ENCODE measurements at regions of chr2 and their contacts with region 1.

Region 1: DNA sequence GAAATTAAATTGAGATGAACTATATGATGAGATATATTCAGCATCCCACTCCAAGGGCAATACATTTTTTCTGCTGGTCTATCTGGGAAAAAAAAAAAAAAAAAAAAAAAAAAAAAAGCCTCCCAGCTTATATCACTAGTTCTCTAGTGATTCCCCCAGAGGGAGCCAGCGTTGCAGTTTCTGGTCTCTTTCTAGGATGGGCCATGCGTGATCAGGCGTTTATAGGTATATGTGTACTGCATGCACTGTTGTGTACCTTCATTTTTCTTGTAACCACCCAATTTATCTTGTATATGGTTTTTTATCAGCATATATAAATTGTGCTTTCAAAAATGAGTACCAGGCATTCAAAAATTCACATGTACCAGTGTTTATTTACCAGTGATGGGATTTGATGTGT is 35.1 kb downstream of the DCDC2C start:
- DNase-seq: peak; percentile 46
- ATAC-seq: peak; percentile 53
- H3K4me3 Mint-ChIP-seq: no peak overlapping the region
- H3K27ac Mint-ChIP-seq: no peak overlapping the region
- H3K4me1 Mint-ChIP-seq: no peaks in the 10 kb centered on the region
- H3K27me3 Mint-ChIP-seq: peaks cover 7% of the 10 kb centered on the region
- CTCF ChIP-seq: peak; percentile 25

Region 2: DNA sequence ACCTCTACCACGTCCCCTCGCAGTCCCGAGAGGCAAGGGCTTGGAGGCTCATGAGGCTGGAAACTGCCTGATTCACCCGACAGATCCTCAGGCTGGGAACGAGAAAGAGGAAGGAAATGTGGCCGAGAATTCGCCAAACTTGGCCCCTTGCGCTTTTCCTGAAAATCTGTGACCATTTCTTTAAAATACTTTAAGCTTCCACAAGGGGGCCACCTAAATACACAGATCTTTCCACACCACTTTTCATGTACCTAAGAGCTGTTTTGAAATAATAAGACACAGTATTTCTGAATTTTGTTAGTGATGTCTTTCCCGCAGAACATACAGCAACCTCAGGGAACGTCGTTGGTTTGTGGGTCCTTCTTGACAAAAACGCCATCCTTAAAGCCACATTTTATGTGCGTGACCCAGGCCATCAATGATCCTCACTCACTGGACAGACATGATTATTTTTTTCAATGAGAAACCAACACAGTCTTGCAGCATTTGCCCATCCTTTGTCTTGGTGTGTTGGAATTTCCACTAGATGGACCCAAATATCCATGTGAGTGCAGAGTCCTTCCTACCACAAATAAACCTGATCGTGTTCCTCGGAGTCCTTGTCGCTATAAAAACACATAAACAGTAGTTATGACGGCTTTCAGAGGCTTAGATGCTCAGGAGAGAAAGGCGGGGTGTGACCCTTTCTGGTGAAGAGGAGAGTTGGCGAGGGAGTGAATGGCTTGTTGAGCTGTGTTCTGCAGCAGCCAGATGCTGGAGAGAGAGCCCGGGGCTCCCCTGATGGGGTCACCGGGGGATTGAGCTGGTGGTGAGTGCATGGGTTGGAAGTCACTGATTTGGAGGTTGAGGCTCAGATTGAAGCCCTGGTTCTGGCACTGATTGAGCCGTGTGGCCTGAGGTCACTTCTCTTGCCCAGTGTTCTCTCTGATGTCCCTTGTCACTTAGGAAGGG is 10.1 kb before region 1 on chr2:
- CTCF ChIA-PET with region 1: interaction called, 11 read pairs
- POLR2A ChIA-PET with region 1: interaction called, 3 read pairs
- intact Hi-C with region 1: no loop called
- DNase-seq: no peak
- ATAC-seq: no peak
- H3K4me3 Mint-ChIP-seq: no peak overlapping the region
- H3K27ac Mint-ChIP-seq: no peak overlapping the region
- H3K4me1 Mint-ChIP-seq: no peaks in the 10 kb centered on the region
- H3K27me3 Mint-ChIP-seq: peaks cover 1% of the 10 kb centered on the region
- CTCF ChIP-seq: peak; percentile 64

Region 3: DNA sequence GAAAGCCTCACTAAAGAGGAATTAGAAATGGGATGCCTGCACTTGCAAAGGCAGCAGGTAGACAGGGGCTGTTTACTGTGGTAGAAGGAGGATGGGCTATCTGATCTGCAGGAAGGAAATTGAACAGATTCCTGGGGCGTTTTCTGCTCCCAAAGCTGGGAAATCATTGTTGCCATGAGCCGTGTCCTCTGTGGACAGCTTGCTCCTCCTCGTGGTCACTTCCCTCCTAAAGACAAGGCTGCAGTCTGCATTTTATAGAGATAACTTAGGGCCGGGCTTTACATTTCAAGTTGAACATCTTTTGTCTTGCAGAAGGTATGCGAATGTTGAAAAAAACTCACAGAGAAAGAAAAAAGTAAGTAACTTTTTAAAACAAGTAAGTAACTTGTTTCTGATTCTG is 15.8 kb after region 1 on chr2:
- CTCF ChIA-PET with region 1: no interaction called
- POLR2A ChIA-PET with region 1: no interaction called
- intact Hi-C with region 1: no loop called
- DNase-seq: no peak
- ATAC-seq: no peak
- H3K4me3 Mint-ChIP-seq: no peak overlapping the region
- H3K27ac Mint-ChIP-seq: no peak overlapping the region
- H3K4me1 Mint-ChIP-seq: no peaks in the 10 kb centered on the region
- H3K27me3 Mint-ChIP-seq: peaks cover 10% of the 10 kb centered on the region
- CTCF ChIP-seq: no peak

Region 4: DNA sequence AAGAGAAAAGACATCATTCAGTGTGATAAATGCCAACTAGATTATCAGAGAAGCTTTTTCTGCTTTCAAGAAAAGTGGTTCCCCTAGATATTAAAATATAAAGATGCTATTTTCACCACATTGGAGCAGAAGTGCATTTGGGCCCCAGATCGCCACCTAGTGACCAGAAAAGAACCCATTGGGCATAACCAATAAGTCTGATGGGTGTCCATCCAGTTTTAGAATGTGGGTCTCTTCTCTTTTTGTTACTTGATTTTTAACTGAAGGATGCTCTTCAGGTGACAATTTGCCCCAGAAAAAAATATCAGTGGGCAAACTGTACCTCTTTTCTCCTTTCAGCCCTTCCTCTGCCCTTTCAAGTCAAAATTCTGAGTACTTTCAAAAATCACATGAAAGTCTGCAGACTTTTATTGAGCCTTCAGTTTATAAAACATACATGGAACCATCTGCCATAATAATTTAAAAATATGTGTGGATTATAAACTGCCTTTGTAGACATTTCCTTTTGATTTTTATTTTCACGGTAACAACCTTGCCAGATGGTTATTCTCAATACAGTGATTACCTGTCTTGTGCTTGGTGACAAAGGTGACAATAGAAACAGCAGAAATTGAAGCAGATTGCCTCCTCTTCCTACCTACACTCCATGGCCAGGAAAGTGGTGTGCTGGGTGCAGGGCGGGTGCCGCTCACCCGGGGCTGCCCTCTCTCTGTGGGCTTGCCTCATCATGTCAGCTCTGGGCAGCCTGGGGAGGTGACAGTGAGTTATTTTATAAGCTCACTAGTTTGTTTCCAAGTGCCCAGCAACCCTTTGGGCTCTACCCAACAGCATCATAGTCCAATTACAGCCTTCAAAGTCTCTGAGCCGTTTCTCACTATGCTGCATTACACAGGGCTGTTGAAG is 89.5 kb after region 1 on chr2:
- CTCF ChIA-PET with region 1: no interaction called
- POLR2A ChIA-PET with region 1: no interaction called
- intact Hi-C with region 1: loop called (anchors 10 kb)
- DNase-seq: peak; percentile 47
- ATAC-seq: no peak
- H3K4me3 Mint-ChIP-seq: no peak overlapping the region
- H3K27ac Mint-ChIP-seq: no peak overlapping the region
- H3K4me1 Mint-ChIP-seq: no peaks in the 10 kb centered on the region
- H3K27me3 Mint-ChIP-seq: no peaks in the 10 kb centered on the region
- CTCF ChIP-seq: peak; percentile 50

Measured in activated CD8-positive, alpha-beta T cell treated with anti-CD3 and anti-CD28 coated beads for 36 hours (primary cell).